ENCODE measurements at regions of chr6 and their contacts with region 1.

Region 1: DNA sequence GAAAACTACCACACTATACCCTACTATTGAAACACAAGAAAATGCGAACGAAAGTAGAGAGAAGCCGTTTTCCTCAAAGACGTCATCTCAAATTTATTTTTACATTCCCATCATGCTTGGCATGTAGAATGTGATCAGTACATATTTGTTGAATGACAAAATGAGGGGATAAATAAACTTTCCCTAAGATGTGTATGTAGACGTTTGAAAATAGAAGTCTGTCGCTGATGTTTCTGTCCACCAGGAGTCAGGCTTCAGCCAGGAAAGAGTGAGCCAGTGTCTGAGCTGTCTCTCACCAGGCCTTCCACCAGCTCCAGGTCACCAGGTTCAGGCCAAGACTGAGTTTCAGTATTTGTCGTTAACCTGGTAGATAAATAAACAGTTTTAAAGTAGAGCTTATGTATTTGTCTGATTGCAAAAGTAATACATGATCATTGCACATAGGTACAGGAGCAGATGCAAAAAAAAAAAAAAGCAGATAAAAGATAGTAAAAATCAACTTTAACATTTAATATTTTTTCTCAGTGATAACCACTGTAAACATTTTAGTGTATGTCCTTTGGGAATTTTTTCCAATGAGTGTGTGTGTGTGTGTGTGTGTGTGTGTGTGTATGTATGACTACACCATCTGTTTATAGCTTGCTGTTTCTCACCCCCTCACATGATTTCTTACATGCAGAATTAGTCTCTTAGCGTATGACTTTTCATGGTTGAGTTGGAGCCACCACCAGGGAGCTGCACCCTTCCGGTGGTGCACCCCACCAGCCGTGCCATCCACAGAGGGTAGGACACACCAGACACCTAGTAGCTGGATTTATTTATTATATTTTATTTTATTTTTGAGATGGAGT is 26.2 kb downstream of the WRNIP1 start:
- DNase-seq: peak; percentile 38 to 77
- ATAC-seq: peak; percentile 78 to 92 (median 90)
- H3K4me3 ChIP-seq: peak overlapping the region in 2 of 10 donors; percentile 5 to 10
- H3K27ac ChIP-seq: peak overlapping the region; percentile 29 to 87 (median 72)
- H3K4me1 ChIP-seq: peaks cover 6 to 57% (median 36%) of the 10 kb centered on the region in 9 donors
- H3K27me3 ChIP-seq: no peaks in the 10 kb centered on the region
- CTCF ChIP-seq: peak; percentile 54 to 89 (median 79)

Region 2: GRCh38 chr6:2749969-2750600 is 41.3 kb before region 1 on chr6:
- intact Hi-C with region 1: no loop called
- DNase-seq: peak; percentile 46 to 60
- ATAC-seq: peak in 4 of 8 donors; percentile 33 to 58 (median 44)
- H3K4me3 ChIP-seq: peak overlapping the region in 6 of 10 donors; percentile 16 to 42 (median 28)
- H3K27ac ChIP-seq: no peak overlapping the region
- H3K4me1 ChIP-seq: peaks cover 0 to 24% (median 14%) of the 10 kb centered on the region in 9 donors
- H3K27me3 ChIP-seq: no peaks in the 10 kb centered on the region
- CTCF ChIP-seq: peak; percentile 82 to 93 (median 90)

Region 3: DNA sequence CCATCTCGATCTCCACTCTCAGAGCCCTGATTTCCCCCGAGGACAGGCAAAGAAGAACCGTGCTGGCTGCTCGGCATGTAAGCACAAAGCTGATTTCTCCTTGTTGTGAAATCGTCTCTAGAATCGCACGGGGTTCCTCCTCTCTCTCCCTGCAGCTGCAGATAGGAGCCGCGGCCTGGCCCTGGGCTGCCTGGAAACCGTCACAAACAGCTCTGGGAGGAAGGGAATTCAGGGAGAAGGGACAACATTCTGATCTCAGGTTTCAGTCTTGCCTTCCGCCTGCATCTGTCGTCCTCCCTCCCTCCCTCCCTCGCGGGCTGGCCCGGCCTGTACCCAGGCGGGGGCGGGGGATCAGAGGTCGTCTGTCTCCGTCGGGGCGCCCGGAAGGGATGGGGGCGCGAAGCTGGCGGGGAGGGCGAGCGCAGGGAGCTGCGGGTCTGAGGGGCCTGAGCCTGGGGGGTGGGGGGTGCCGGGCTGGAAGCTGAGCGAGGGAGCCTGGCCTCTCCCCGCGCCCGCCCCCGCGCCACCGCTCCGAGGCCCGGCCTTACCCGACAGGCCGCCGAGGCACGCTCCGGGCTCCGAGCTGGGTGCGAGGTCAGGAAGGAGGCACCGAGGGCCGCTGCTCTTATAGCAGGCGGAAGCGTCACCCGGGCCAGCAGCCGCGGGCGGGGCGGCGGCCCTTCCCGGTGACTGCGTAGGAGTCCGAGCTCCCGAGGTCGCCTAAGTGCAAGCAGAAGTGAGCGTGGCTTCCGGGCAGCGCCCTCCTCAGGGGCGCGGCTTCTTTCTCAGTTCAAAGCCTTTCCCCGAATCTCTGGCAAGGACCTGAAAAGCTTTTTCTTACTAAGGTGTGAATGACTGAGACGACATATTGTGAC is 50.2 kb after region 1 on chr6 and contains the start of gene SERPINB1:
- intact Hi-C with region 1: loop called in 9 of 10 experiments (anchors 2 to 5 kb)
- DNase-seq: peak; percentile 90 to 92
- ATAC-seq: peak; percentile 87 to 95 (median 93)
- H3K4me3 ChIP-seq: peak within 1 kb of the TSS; percentile 29 to 73 (median 66)
- H3K27ac ChIP-seq: peak within 1 kb of the TSS; percentile 95 to 99 (median 97)
- H3K4me1 ChIP-seq: peaks cover 13 to 76% (median 35%) of the 10 kb centered on the region in 9 donors
- H3K27me3 ChIP-seq: no peaks in the 10 kb centered on the region
- CTCF ChIP-seq: peak in 3 of 9 donors; percentile 41 to 50 (median 43)
- total RNA-seq, gene SERPINB1: 17.7 to 73.7 (median 22.5) TPM

Region 4: GRCh38 chr6:2917065-2917464 is 125.7 kb after region 1 on chr6:
- intact Hi-C with region 1: loop called in 3 of 10 experiments (anchors 5 to 10 kb)
- DNase-seq: no peak
- ATAC-seq: no peak
- H3K4me3 ChIP-seq: no peak overlapping the region
- H3K27ac ChIP-seq: no peak overlapping the region
- H3K4me1 ChIP-seq: peaks cover 0 to 16% (median 0%) of the 10 kb centered on the region in 9 donors
- H3K27me3 ChIP-seq: no peaks in the 10 kb centered on the region
- CTCF ChIP-seq: no peak

Region 5: DNA sequence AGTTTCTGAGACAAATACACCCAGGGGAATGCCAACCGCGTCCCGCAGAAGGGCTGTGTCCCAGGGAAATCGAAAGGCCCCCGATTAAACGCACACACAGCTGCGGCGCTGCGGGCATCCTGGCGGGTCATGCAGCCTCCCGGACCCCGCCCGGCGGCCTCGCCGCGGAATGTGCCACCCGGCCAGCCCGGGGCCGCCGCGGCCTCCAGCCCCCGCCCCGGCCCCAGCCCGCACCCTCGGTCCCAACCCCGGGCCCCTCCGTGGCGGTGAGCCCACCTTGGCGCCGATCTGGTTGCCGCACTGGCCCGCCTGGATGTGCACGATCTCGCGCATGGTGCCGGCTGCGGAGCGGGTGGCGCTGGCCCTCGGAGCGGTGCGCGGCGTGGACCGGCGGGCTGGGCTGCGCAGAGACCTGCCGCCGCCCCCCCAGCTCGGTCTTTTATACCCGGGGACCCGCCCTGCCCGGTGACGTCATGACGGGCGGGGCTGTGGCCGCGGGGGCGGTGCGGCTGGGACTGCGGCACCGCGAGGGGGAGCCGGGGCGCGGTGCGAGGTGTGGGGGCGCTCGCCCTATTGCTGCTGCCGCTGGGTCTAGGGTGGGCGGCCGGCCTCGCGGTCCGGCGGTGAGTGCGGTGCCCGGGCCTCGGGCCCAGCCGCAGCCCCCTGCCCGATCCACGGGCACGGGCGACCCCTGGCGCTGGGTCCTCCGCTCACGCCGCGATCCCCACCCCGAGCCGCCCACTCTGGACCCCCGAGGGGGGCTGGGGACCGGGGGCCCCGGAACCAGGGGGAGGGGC is 366.0 kb after region 1 on chr6 and contains the start of gene TUBB2A:
- intact Hi-C with region 1: no loop called
- DNase-seq: peak; percentile 84 to 90
- ATAC-seq: peak; percentile 87 to 95 (median 92)
- H3K4me3 ChIP-seq: peak within 1 kb of the TSS; percentile 81 to 98 (median 88)
- H3K27ac ChIP-seq: peak within 1 kb of the TSS; percentile 93 to 100 (median 99)
- H3K4me1 ChIP-seq: peaks cover 0 to 35% (median 0%) of the 10 kb centered on the region in 9 donors
- H3K27me3 ChIP-seq: no peaks in the 10 kb centered on the region
- CTCF ChIP-seq: peak in 8 of 9 donors; percentile 34 to 83 (median 67)
- total RNA-seq, gene TUBB2A: 7.0 to 49.6 (median 17.5) TPM

Measured in heart right ventricle (tissue), 16 donors.